ENCODE measurements at regions of chr18 and their contacts with region 1.

Region 1: GRCh38 chr18:45974088-45974536 is 7.0 kb upstream of the EPG5 start:
- DNase-seq: peak; percentile 32
- ATAC-seq: peak; percentile 90
- H3K4me3 ChIP-seq: no peak overlapping the region
- H3K27ac ChIP-seq: no peak overlapping the region
- H3K4me1 ChIP-seq: no peaks in the 10 kb centered on the region
- H3K27me3 ChIP-seq: no peaks in the 10 kb centered on the region
- CTCF ChIP-seq: peak; percentile 57 to 87 (median 64); a peak in 5 of 6 replicates
- EP300 ChIP-seq: no peak
- POLR2A ChIP-seq: no peak
- RAD21 ChIP-seq: peak; percentile 93

Region 2: GRCh38 chr18:45621061-45621511 is 353.0 kb before region 1 on chr18:
- CTCF ChIA-PET with region 1: interaction called, 6 read pairs
- POLR2A ChIA-PET with region 1: no interaction called
- RAD21 ChIA-PET with region 1: interaction called, 3 read pairs
- SMC1A ChIA-PET with region 1: interaction called, 3 read pairs
- in situ Hi-C with region 1: no loop called
- intact Hi-C with region 1: loop called (anchors 2 kb)
- DNase-seq: no peak
- ATAC-seq: peak; percentile 85
- H3K4me3 ChIP-seq: no peak overlapping the region
- H3K27ac ChIP-seq: no peak overlapping the region
- H3K4me1 ChIP-seq: no peaks in the 10 kb centered on the region
- H3K27me3 ChIP-seq: peaks cover 0 to 2% of the 10 kb centered on the region in 2 experiments; a peak in 2 of 4 replicates
- CTCF ChIP-seq: peak; percentile 87 to 97 (median 95)
- EP300 ChIP-seq: no peak
- POLR2A ChIP-seq: no peak
- RAD21 ChIP-seq: peak; percentile 62

Region 3: GRCh38 chr18:45910405-45911023 is 63.6 kb before region 1 on chr18:
- CTCF ChIA-PET with region 1: no interaction called
- POLR2A ChIA-PET with region 1: no interaction called
- RAD21 ChIA-PET with region 1: no interaction called
- SMC1A ChIA-PET with region 1: interaction called, 3 read pairs
- in situ Hi-C with region 1: no loop called
- intact Hi-C with region 1: loop called (anchors 5 kb)
- DNase-seq: peak; percentile 2
- ATAC-seq: peak; percentile 95
- H3K4me3 ChIP-seq: no peak overlapping the region
- H3K27ac ChIP-seq: no peak overlapping the region
- H3K4me1 ChIP-seq: no peaks in the 10 kb centered on the region
- H3K27me3 ChIP-seq: no peaks in the 10 kb centered on the region
- CTCF ChIP-seq: peak; percentile 71 to 81 (median 74)
- EP300 ChIP-seq: no peak
- POLR2A ChIP-seq: no peak
- RAD21 ChIP-seq: peak; percentile 66

Region 4: DNA sequence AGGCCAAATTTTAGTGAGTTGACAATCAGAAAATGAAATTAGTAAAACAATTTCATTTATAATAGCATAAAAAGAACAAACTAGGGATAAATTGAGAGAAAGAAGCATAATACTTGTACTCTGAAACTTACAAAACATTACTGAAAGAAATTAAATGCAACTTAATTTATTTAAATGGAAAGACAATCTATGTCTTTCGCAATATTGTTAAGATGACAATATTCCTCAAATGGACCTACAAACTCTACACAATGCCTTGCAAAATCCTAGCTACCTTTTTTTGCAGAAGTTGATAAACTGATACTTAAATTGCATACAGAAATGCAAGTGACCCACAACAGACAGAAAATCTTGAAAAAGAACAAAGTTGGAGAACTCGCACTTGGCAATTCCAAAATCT is 16.1 kb before region 1 on chr18:
- CTCF ChIA-PET with region 1: no interaction called
- POLR2A ChIA-PET with region 1: no interaction called
- RAD21 ChIA-PET with region 1: no interaction called
- SMC1A ChIA-PET with region 1: no interaction called
- in situ Hi-C with region 1: no loop called
- intact Hi-C with region 1: no loop called
- DNase-seq: no peak
- ATAC-seq: no peak
- H3K4me3 ChIP-seq: no peak overlapping the region
- H3K27ac ChIP-seq: no peak overlapping the region
- H3K4me1 ChIP-seq: no peaks in the 10 kb centered on the region
- H3K27me3 ChIP-seq: no peaks in the 10 kb centered on the region
- CTCF ChIP-seq: no peak
- EP300 ChIP-seq: no peak
- POLR2A ChIP-seq: no peak
- RAD21 ChIP-seq: no peak